ENCODE measurements at regions of chr12 and their contacts with region 1.

Region 1: DNA sequence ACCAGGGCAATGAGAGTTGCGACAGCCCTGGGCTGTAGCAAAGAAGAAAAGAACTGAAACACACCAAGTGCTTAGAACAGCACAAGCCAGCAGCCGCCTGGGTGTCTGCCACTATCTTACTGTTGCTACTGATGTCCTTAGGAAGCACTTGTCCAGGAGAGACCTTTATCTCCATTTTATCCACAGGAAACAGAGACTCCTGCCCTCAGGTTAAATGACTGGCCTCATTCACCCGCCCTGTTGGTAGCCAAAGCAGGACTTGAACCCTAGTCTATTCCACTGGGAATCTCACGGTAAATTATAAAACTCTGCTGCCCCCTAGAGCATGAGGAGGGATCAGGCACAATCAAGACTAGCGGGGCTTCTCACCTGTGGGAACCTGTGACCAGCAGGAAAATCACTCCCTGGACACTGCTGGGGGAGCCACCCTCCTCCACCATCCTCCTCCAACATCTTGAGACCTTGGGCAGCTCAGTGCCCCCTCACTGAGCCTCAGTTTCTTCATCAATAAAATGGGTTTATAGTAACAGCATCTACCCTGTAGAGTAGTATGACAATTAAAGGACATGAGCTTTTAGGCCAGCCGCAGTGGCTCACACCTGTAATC is 20.5 kb upstream of the TESC start:
- DNase-seq: peak in 1 of 2 experiments; percentile 79
- H3K4me3 ChIP-seq: no peak overlapping the region
- H3K27ac ChIP-seq: no peak overlapping the region
- H3K4me1 ChIP-seq: peaks cover 0 to 7% (median 3%) of the 10 kb centered on the region in 4 experiments; a peak in 6 of 7 replicates
- H3K27me3 ChIP-seq: no peaks in the 10 kb centered on the region
- CTCF ChIP-seq: peak; percentile 63 to 89 (median 86)
- EP300 ChIP-seq: no peak
- POLR2A ChIP-seq: no peak
- RAD21 ChIP-seq: peak; percentile 88 to 95

Region 2: GRCh38 chr12:117018276-117018675 is 101.4 kb before region 1 on chr12:
- CTCF ChIA-PET with region 1: interaction called, 161 read pairs
- POLR2A ChIA-PET with region 1: no interaction called
- DNase-seq: no peak
- H3K4me3 ChIP-seq: no peak overlapping the region
- H3K27ac ChIP-seq: no peak overlapping the region
- H3K4me1 ChIP-seq: peaks cover 0 to 5% (median 0%) of the 10 kb centered on the region in 4 experiments; a peak in 1 of 7 replicates
- H3K27me3 ChIP-seq: no peaks in the 10 kb centered on the region
- CTCF ChIP-seq: no peak
- EP300 ChIP-seq: no peak
- POLR2A ChIP-seq: no peak
- RAD21 ChIP-seq: no peak

Region 3: GRCh38 chr12:117042171-117042842 is 77.4 kb before region 1 on chr12:
- CTCF ChIA-PET with region 1: interaction called, 21 read pairs
- POLR2A ChIA-PET with region 1: no interaction called
- DNase-seq: no peak
- H3K4me3 ChIP-seq: no peak overlapping the region
- H3K27ac ChIP-seq: no peak overlapping the region
- H3K4me1 ChIP-seq: peaks cover 3 to 12% (median 7%) of the 10 kb centered on the region in 4 experiments
- H3K27me3 ChIP-seq: no peaks in the 10 kb centered on the region
- CTCF ChIP-seq: no peak
- EP300 ChIP-seq: no peak
- POLR2A ChIP-seq: no peak
- RAD21 ChIP-seq: no peak

Region 4: DNA sequence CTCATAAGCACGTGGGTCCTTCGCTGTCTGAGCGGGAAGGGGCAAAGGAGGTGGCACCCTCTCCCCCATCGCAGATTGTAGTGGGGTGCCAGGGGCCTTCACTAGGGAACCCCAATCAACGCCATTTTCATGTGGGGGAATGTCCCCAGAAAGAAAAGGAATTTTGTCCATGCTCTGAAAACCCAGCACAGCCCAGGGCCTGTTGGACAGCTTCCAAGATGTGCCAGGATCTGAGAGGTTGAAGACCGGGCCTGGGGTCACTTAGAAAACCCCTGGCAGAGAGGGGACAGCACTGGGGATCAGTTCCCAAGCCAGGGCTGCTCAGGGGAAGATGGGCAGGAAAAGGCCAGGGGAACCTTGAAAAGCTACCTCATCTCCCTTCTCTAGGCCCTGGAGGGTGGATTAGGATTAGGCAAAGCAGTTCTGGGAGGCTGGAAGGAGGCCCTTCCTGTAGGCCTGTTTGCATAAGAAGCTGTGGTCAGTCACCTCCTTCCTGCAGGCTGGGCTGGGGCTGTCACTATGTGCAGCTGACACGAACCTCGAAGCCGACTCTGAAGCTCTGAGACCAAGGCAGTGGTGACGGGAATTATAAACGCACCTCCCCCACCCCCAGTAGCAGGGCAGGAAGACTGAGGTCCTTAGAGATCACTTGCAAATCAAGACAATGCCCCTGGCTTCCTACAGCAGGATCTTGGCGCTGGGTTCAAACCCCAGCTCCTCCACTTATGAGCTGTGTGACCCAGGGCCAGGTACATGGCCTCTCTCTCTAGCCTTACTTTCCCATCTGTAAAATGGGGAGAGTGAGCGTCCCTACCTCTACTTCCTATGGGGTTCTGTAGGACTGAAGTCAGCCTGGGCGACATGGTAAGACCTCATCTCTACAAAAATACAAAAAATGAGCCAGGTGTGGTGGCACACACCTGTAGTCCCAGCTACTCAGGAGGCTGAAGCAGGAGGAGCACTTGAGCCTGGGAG is 49.5 kb before region 1 on chr12:
- CTCF ChIA-PET with region 1: interaction called, 12 read pairs
- POLR2A ChIA-PET with region 1: no interaction called
- DNase-seq: no peak
- H3K4me3 ChIP-seq: no peak overlapping the region
- H3K27ac ChIP-seq: no peak overlapping the region
- H3K4me1 ChIP-seq: peaks cover 0 to 4% (median under 1%) of the 10 kb centered on the region in 4 experiments; a peak in 3 of 7 replicates
- H3K27me3 ChIP-seq: no peaks in the 10 kb centered on the region
- CTCF ChIP-seq: no peak
- EP300 ChIP-seq: no peak
- POLR2A ChIP-seq: no peak
- RAD21 ChIP-seq: no peak

Region 5: GRCh38 chr12:117105902-117106301 is 13.8 kb before region 1 on chr12:
- CTCF ChIA-PET with region 1: interaction called, 32 read pairs
- POLR2A ChIA-PET with region 1: interaction called, 3 read pairs
- DNase-seq: no peak
- H3K4me3 ChIP-seq: no peak overlapping the region
- H3K27ac ChIP-seq: no peak overlapping the region
- H3K4me1 ChIP-seq: peaks cover 0 to 5% (median 0%) of the 10 kb centered on the region in 4 experiments; a peak in 1 of 7 replicates
- H3K27me3 ChIP-seq: no peaks in the 10 kb centered on the region
- CTCF ChIP-seq: no peak
- EP300 ChIP-seq: no peak
- POLR2A ChIP-seq: no peak
- RAD21 ChIP-seq: no peak